Heart right ventricle (tissue), 16 donors: ENCODE measurements at regions of chr12 and their contacts with region 1.

Region 1: DNA sequence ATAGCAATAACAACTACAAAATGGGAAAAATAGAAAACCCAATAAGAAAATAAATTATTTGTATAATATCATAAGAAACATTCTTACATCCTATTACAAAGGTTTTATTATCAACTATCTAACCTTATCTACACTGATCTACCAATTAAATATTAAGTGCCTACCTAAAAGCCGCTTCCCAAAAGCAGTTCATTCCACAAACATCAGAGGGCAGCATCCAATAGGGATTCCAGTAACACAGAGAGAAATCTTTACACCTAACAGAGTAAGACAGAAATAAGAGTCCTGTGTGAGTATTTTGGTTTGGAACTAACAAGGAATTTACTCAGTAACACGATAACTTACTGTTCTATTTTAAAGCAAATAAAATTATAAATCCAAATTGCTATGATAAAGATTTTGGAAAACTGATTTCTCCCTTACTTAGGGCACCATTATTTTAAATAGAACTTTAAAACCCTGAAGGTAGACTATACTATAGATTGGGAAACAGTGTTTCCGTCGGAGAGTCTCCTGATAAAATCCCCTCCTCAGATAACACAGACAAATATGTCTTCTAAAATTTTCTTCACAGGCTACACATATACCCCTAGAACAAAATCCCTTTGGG is 15.0 kb downstream of the GXYLT1 start:
- DNase-seq: peak in 1 of 2 donors; percentile 45
- ATAC-seq: peak; percentile 54 to 84 (median 75)
- H3K4me3 ChIP-seq: no peak overlapping the region
- H3K27ac ChIP-seq: no peak overlapping the region
- H3K4me1 ChIP-seq: peaks cover 4 to 32% (median 20%) of the 10 kb centered on the region in 9 donors
- H3K27me3 ChIP-seq: no peaks in the 10 kb centered on the region
- CTCF ChIP-seq: peak; percentile 69 to 93 (median 83)

Region 2: DNA sequence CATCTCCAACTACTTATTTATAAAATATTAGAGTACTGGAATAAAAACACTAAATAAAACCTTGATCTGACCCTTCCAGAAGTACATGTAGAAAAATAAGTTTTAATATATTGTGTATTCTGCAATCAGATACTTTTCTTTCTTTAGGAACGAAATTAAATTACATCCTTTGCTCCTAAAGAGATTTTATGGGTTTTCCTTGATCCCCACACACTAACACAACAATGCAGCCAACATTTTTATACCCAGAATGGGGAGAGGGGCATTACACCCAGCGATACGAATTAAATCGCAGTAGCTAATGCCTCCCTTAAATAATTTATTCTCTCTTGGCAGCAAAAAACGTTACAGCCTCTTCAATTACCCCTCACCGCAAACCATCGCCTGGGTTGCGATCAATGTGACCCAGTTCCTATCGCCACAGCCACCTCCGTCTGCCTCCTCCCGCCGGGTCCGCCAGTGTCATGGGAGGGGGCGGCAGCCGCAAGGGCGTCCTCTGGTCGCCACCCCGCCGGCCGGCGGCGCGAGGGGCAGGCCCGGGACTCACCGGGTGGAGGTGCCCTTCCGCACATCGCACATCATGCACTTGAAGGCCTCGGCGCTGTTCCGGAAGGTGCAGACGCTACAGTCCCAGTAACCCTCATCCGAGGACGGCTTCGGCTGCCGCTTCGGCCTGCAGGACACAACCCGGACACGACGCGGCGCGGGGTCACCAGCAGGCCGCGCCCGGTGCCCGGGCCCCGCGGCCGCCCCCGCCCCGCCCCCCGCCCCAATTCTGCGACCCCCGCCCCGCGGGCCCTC is 107.6 kb after region 1 on chr12:
- intact Hi-C with region 1: no loop called
- DNase-seq: peak; percentile 68 to 78
- ATAC-seq: peak; percentile 66 to 88 (median 72)
- H3K4me3 ChIP-seq: peak overlapping the region; percentile 60 to 92 (median 76)
- H3K27ac ChIP-seq: peak overlapping the region; percentile 88 to 99 (median 94)
- H3K4me1 ChIP-seq: peaks cover 0 to 58% (median 47%) of the 10 kb centered on the region in 9 donors
- H3K27me3 ChIP-seq: no peaks in the 10 kb centered on the region
- CTCF ChIP-seq: peak in 8 of 9 donors; percentile 17 to 58 (median 45)

Region 3: GRCh38 chr12:42284157-42284556 is 154.5 kb after region 1 on chr12:
- intact Hi-C with region 1: no loop called
- DNase-seq: no peak
- ATAC-seq: no peak
- H3K4me3 ChIP-seq: no peak overlapping the region
- H3K27ac ChIP-seq: no peak overlapping the region
- H3K4me1 ChIP-seq: peaks cover 0 to 5% (median 0%) of the 10 kb centered on the region in 9 donors
- H3K27me3 ChIP-seq: peaks cover 0 to 4% (median 0%) of the 10 kb centered on the region in 7 donors
- CTCF ChIP-seq: no peak

Region 4: GRCh38 chr12:42332301-42333285 is 202.9 kb after region 1 on chr12:
- intact Hi-C with region 1: loop called in 7 of 10 experiments (anchors 1 to 5 kb)
- DNase-seq: peak in 1 of 2 donors; percentile 42
- ATAC-seq: peak in 4 of 8 donors; percentile 44 to 61 (median 57)
- H3K4me3 ChIP-seq: no peak overlapping the region
- H3K27ac ChIP-seq: no peak overlapping the region
- H3K4me1 ChIP-seq: peaks cover 0 to 26% (median 12%) of the 10 kb centered on the region in 9 donors
- H3K27me3 ChIP-seq: no peaks in the 10 kb centered on the region
- CTCF ChIP-seq: peak; percentile 37 to 83 (median 69)

Region 5: GRCh38 chr12:42469355-42470175 is 339.9 kb after region 1 on chr12:
- intact Hi-C with region 1: loop called in 1 of 10 experiments (anchors 10 kb)
- DNase-seq: no peak
- ATAC-seq: peak in 1 of 8 donors; percentile 23
- H3K4me3 ChIP-seq: peak overlapping the region in 3 of 10 donors; percentile 6 to 42 (median 6)
- H3K27ac ChIP-seq: peak overlapping the region in 2 of 10 donors; percentile 34 to 69
- H3K4me1 ChIP-seq: peaks cover 13 to 61% (median 50%) of the 10 kb centered on the region in 9 donors
- H3K27me3 ChIP-seq: no peaks in the 10 kb centered on the region
- CTCF ChIP-seq: no peak

Region 6: GRCh38 chr12:42574851-42575266 is 445.2 kb after region 1 on chr12:
- intact Hi-C with region 1: loop called in 1 of 10 experiments (anchors 10 kb)
- DNase-seq: no peak
- ATAC-seq: no peak
- H3K4me3 ChIP-seq: no peak overlapping the region
- H3K27ac ChIP-seq: peak overlapping the region in 2 of 10 donors; percentile 2 to 55
- H3K4me1 ChIP-seq: peaks cover 2 to 73% (median 31%) of the 10 kb centered on the region in 9 donors
- H3K27me3 ChIP-seq: no peaks in the 10 kb centered on the region
- CTCF ChIP-seq: no peak

Region 7: DNA sequence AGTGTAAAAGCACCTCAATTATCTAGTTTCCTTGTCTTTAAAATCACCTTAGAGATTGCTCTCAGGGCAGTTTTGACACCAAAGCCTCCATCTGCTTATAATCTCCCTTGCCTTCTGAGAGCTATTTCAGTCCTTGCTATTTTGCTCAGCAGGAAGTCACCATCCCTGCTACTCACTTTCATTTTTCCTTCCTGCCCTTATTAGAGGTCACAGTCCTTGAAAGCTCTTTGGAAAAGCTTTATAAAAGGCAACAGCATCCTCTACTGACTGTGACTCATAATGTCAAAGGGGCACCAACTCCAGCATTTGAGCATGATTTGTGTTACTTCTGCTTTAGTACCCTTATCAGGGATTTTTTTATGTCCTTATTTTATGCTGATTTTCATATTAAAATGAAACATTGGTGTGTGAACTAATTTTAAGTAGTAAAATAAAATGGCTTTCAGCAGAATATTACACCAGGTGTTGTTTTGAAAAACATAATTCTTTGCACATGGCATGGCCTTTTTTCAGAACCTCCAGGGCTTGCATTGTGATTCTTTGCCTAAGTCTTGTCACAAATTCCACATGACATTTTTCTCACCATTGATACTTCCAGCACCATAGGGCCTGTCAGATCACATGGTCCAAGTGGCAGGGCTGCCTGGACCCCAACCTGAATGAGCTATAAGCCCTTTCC is 1209.3 kb after region 1 on chr12:
- intact Hi-C with region 1: loop called in 4 of 10 experiments (anchors 5 to 10 kb)
- DNase-seq: peak in 1 of 2 donors; percentile 31
- ATAC-seq: peak; percentile 93 to 100 (median 96)
- H3K4me3 ChIP-seq: no peak overlapping the region
- H3K27ac ChIP-seq: peak overlapping the region in 6 of 10 donors; percentile 28 to 71 (median 48)
- H3K4me1 ChIP-seq: peaks cover 0 to 19% (median 16%) of the 10 kb centered on the region in 9 donors
- H3K27me3 ChIP-seq: no peaks in the 10 kb centered on the region
- CTCF ChIP-seq: peak; percentile 22 to 87 (median 70)